Brain microvascular endothelial cell (primary cell): ENCODE measurements at regions of chr1 and their contacts with region 1.

Region 1: GRCh38 chr1:154241703-154242351 is 21.1 kb downstream of the UBAP2L start:
- DNase-seq: no peak
- H3K4me3 ChIP-seq: no peak overlapping the region
- H3K27ac ChIP-seq: no peak overlapping the region
- H3K27me3 ChIP-seq: no peaks in the 10 kb centered on the region
- CTCF ChIP-seq: no peak

Region 2: DNA sequence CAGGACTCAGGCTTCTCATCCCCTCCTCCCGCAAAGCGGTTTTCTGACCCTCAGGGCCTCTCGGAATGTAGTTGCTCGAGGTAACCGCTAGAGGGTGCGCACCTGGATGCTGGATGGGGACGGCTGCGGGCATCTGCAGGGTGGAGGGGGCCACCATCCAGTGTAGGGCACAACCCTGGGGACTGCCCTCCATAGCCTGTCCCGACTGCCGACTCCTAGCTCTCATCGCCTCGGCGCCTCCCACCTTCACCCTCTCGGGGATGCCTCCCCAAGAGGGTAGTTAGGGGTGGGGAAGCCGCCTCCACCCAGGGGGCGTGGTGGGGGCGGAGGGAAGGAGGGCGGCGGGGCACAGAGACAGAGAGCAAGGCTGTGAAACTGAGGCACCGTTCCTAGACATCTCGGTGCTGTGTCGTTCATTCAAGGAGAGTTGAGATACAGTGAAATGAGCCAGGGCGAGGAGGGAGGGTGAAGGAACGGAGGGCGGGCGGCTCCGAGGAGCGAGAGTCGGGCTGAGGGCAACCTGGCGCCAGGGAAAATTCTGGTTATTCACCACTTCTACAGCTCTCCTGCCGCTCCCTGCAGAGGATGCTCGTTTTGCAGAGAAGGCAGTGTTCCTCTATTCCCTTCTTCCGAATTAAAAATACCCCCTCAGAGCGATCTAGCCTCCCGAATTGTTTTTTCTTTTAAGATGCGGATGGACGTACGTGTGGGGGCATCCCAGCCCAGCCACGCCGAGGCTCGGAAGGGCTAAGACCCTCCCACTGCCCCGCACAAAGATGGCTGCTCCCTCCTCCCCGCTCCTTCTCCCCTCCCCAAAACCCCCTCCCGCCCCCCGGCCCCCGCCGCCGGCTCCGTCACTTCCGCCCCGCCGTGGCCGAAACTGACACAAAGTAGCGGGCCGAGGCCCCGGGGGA is 83.1 kb after region 1 on chr1 and contains the start of gene ATP8B2:
- in situ Hi-C with region 1: loop called (anchors 25 kb)
- DNase-seq: peak; percentile 57
- H3K4me3 ChIP-seq: peak within 1 kb of the TSS; percentile 83
- H3K27ac ChIP-seq: peak within 1 kb of the TSS; percentile 76
- H3K27me3 ChIP-seq: peaks cover 7% of the 10 kb centered on the region
- CTCF ChIP-seq: peak; percentile 96